ENCODE measurements at regions of chr12 and their contacts with region 1.

Region 1: GRCh38 chr12:32548691-32549281 is 130.3 kb upstream of the DNM1L start:
- DNase-seq: no peak

Region 2: GRCh38 chr12:31819427-31819826 is 729.4 kb before region 1 on chr12:
- intact Hi-C with region 1: no loop called
- DNase-seq: no peak

Region 3: DNA sequence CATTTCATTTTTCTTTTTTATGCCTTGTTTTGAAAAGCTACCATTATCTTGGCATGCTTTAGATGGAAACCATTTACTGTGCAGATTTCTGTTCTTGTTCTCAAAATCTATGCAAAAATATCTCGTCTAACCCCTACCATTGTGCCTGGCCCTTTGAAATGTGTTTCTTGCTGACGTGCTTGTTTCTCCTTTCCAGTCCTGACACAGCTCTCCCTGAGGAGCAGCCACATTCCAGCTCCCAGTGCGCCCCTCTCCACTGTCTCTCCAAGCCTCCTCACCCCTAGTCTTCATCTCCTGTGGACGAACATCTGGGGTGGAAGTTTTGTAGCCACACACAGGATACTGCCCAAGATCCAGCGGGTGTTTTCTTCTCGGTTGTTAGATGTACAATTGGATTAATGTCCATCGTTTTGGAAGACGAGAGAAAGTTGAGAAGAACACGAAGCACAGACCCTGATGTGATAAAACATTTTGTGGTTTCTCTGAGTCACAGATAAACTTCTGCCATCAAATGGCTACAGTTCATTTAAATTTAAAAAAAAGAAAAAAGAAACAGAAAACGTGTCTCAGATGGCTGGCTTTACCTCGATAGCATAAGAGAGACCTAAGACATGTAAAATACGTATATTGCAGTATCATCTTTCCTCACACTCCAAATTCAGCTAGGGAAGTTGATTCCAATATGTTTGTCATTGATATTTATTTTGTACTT is 171.3 kb before region 1 on chr12:
- intact Hi-C with region 1: no loop called
- DNase-seq: no peak

Region 4: GRCh38 chr12:32659908-32660440 is 111.2 kb after region 1 on chr12:
- intact Hi-C with region 1: loop called (anchors 10 kb)
- DNase-seq: no peak